K562 (cell line): ENCODE measurements at regions of chr14 and their contacts with region 1.

Region 1: GRCh38 chr14:39174560-39175444 is at the start of gene PNN:
- DNase-seq: peak; percentile 84 to 97 (median 88)
- ATAC-seq: peak; percentile 93
- H3K4me3 ChIP-seq: peak within 1 kb of the TSS; percentile 90
- H3K27ac ChIP-seq: peak within 1 kb of the TSS; percentile 96
- H3K4me1 ChIP-seq: peaks cover 9 to 18% of the 10 kb centered on the region in 2 experiments; a peak in 4 of 5 replicates
- H3K27me3 ChIP-seq: no peaks in the 10 kb centered on the region
- CTCF ChIP-seq: no peak
- EP300 ChIP-seq: peak; percentile 4; the same call in 1 of the 2 replicates
- POLR2A ChIP-seq: peak; percentile 93
- RAD21 ChIP-seq: no peak
- polyA plus RNA-seq, gene PNN: 30.2 to 38.1 TPM

Region 2: GRCh38 chr14:39114073-39114838 is 60.5 kb before region 1 on chr14 and contains the start of gene GEMIN2:
- CTCF ChIA-PET with region 1: no interaction called
- POLR2A ChIA-PET with region 1: interaction called, 4 read pairs
- in situ Hi-C with region 1: no loop called
- intact Hi-C with region 1: loop called (anchors 2 kb)
- DNase-seq: peak; percentile 77 to 93 (median 86)
- ATAC-seq: peak; percentile 96
- H3K4me3 ChIP-seq: peak within 1 kb of the TSS; percentile 66
- H3K27ac ChIP-seq: peak within 1 kb of the TSS; percentile 76
- H3K4me1 ChIP-seq: peaks cover 0 to 4% of the 10 kb centered on the region in 2 experiments; a peak in 2 of 5 replicates
- H3K27me3 ChIP-seq: no peaks in the 10 kb centered on the region
- CTCF ChIP-seq: no peak
- EP300 ChIP-seq: no peak
- POLR2A ChIP-seq: peak; percentile 81
- RAD21 ChIP-seq: no peak
- polyA plus RNA-seq, gene GEMIN2: 54.5 to 60.8 TPM

Region 3: GRCh38 chr14:39145266-39145966 is 29.4 kb before region 1 on chr14:
- CTCF ChIA-PET with region 1: no interaction called
- POLR2A ChIA-PET with region 1: interaction called, 7 read pairs
- in situ Hi-C with region 1: no loop called
- intact Hi-C with region 1: loop called (anchors 1 kb)
- DNase-seq: peak; percentile 51 to 90 (median 70)
- ATAC-seq: peak; percentile 99
- H3K4me3 ChIP-seq: no peak overlapping the region
- H3K27ac ChIP-seq: peak overlapping the region; percentile 66; the same call in 2 of the 3 replicates
- H3K4me1 ChIP-seq: peaks cover 7 to 9% of the 10 kb centered on the region in 2 experiments; a peak in 4 of 5 replicates
- H3K27me3 ChIP-seq: no peaks in the 10 kb centered on the region
- CTCF ChIP-seq: no peak
- EP300 ChIP-seq: peak; percentile 77
- POLR2A ChIP-seq: no peak
- RAD21 ChIP-seq: 0 out of 4 replicates have a peak, but pooled peaks of 1 of the 2 experiments have one; percentile 17

Region 4: GRCh38 chr14:39160930-39161329 is 13.9 kb before region 1 on chr14:
- CTCF ChIA-PET with region 1: no interaction called
- POLR2A ChIA-PET with region 1: interaction called, 13 read pairs
- in situ Hi-C with region 1: no loop called
- intact Hi-C with region 1: no loop called
- DNase-seq: no peak
- ATAC-seq: no peak
- H3K4me3 ChIP-seq: no peak overlapping the region
- H3K27ac ChIP-seq: no peak overlapping the region
- H3K4me1 ChIP-seq: no peaks in the 10 kb centered on the region
- H3K27me3 ChIP-seq: no peaks in the 10 kb centered on the region
- CTCF ChIP-seq: no peak
- EP300 ChIP-seq: no peak
- POLR2A ChIP-seq: no peak
- RAD21 ChIP-seq: no peak

Region 5: GRCh38 chr14:39266871-39267591 is 92.2 kb after region 1 on chr14:
- CTCF ChIA-PET with region 1: no interaction called
- POLR2A ChIA-PET with region 1: interaction called, 5 read pairs
- in situ Hi-C with region 1: no loop called
- intact Hi-C with region 1: loop called (anchors 10 kb)
- DNase-seq: peak; percentile 52 to 81 (median 63)
- ATAC-seq: peak; percentile 91
- H3K4me3 ChIP-seq: peak overlapping the region; percentile 67
- H3K27ac ChIP-seq: peak overlapping the region; percentile 97
- H3K4me1 ChIP-seq: peaks cover 11 to 16% of the 10 kb centered on the region in 2 experiments; a peak in 4 of 5 replicates
- H3K27me3 ChIP-seq: no peaks in the 10 kb centered on the region
- CTCF ChIP-seq: no peak
- EP300 ChIP-seq: no peak
- POLR2A ChIP-seq: peak; percentile 71
- RAD21 ChIP-seq: no peak

Region 6: DNA sequence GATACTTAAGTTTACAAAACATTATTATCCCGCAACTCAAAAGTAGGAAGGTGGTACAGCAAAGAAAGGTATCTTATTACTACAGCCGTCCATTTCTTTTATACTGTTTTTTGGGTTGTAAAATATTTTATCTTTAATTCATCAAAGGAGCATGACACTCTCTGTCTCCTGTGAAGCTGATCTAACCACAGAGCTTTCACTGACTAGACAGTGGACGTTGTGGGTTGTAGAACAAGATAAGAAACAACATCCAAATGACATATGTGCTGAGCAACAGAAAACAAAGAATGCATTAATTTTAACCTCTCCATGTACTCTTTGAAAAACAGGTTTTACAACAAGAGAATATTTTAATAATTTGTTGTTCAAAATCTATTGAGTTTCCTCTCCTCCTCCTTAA is 453.3 kb after region 1 on chr14:
- CTCF ChIA-PET with region 1: no interaction called
- POLR2A ChIA-PET with region 1: no interaction called
- in situ Hi-C with region 1: no loop called
- intact Hi-C with region 1: no loop called
- DNase-seq: no peak
- ATAC-seq: no peak
- H3K4me3 ChIP-seq: no peak overlapping the region
- H3K27ac ChIP-seq: no peak overlapping the region
- H3K4me1 ChIP-seq: no peaks in the 10 kb centered on the region
- H3K27me3 ChIP-seq: no peaks in the 10 kb centered on the region
- CTCF ChIP-seq: no peak
- EP300 ChIP-seq: no peak
- POLR2A ChIP-seq: no peak
- RAD21 ChIP-seq: no peak